Astrocyte of the cerebellum (primary cell): ENCODE measurements at regions of chr9 and their contacts with region 1.

Region 1: DNA sequence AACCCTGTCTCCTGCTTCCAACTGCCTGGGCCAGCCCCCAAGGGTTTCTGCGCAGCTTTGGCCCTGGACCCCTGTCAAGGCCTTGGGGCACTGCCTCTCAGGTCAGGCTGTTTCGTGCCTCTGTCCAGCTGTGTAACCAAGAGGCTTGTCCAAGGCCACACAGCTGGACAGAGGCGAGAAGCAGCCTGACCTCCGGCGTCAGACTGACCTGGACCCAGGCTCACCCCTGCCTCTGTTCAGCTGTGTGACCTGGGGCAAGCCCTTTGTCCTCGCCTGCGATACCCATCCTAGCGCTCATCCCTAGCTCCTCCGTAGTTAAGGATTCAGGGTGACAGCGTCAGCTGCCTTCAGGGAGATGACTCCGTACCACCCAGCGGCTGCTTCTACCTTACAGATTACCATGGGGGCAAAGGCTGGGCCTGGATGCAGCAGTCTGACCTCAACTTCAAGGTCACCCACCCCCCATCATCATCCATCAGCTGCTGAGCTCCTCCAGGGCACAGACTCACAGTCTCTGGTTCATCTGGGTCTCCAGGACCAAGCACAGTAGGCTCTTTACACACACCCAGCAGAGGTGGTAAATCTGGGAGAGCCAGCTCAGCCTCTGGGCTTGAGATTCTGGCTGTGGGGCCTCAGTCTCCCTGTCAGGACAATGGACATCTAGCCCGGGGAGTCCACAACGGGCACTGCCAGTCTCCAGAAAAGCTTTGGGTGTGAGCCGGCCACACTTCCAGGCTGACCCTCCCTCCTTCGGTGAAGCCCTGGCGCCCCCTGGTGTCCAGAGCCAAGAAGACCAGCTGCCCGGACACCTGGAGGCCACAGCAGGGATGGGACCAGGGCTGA is 7.9 kb downstream of the AK1 start:
- DNase-seq: peak; percentile 58
- H3K4me3 ChIP-seq: no peak overlapping the region
- CTCF ChIP-seq: peak; percentile 88

Region 2: GRCh38 chr9:127637322-127637847 is 232.1 kb before region 1 on chr9:
- in situ Hi-C with region 1: loop called (anchors 25 kb)
- DNase-seq: no peak
- H3K4me3 ChIP-seq: no peak overlapping the region
- CTCF ChIP-seq: no peak

Region 3: DNA sequence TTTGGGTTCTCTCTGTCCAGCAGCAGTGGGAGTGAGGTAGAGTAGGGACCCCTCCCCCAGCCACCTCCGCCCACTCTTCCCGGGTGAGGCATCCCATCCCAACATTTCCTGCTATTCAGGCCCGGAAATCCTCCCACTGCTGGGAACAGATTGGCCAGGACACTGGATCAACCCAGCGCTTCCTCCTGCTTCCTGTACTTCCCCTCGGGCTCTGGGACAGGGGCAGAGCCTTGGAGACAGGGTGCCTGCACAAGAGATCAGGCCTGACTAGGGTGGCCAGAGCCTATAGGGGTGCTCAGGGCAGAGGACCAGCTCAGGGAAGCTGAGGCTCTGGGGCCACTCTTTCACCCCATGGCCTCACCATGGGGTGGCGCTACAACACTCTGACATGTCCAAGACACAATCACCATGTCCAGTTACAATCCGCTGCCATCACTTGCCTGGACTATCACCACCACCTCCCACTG is 105.6 kb before region 1 on chr9:
- in situ Hi-C with region 1: loop called (anchors 5 kb)
- DNase-seq: no peak
- H3K4me3 ChIP-seq: no peak overlapping the region
- CTCF ChIP-seq: no peak

Region 4: GRCh38 chr9:128484686-128485413 is 615.3 kb after region 1 on chr9:
- in situ Hi-C with region 1: no loop called
- DNase-seq: no peak
- H3K4me3 ChIP-seq: no peak overlapping the region
- CTCF ChIP-seq: no peak